ENCODE measurements at regions of chr1 and their contacts with region 1.

Region 1: GRCh38 chr1:207619871-207620542 is 24.9 kb upstream of the CR1L start:
- DNase-seq: peak; percentile 6
- ATAC-seq: peak; percentile 96
- H3K4me3 Mint-ChIP-seq: no peak overlapping the region
- H3K27ac Mint-ChIP-seq: no peak overlapping the region
- H3K4me1 Mint-ChIP-seq: no peaks in the 10 kb centered on the region
- H3K27me3 Mint-ChIP-seq: no peaks in the 10 kb centered on the region
- CTCF ChIP-seq: peak; percentile 48

Region 2: DNA sequence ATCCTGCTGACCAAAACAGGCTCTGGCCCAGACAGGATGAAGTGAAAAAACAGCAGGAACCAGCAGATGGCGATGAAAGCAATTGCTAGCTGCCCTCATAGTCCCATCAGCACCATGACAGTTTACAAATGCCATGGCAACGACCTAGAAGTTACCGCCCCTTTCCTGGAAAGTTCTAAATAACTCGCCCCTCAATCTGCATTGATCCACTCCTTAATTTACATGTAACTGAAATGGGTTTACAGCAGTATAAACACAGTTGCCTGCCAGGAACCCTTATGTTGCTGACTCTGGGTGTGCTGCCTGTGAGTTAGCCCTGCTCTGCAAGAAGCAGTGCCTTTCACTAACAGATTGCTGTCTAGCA is 40.6 kb before region 1 on chr1:
- CTCF ChIA-PET with region 1: interaction called, 16 read pairs
- POLR2A ChIA-PET with region 1: no interaction called
- intact Hi-C with region 1: no loop called
- DNase-seq: peak; percentile 67
- ATAC-seq: peak; percentile 85
- H3K4me3 Mint-ChIP-seq: no peak overlapping the region
- H3K27ac Mint-ChIP-seq: no peak overlapping the region
- H3K4me1 Mint-ChIP-seq: peaks cover 5% of the 10 kb centered on the region
- H3K27me3 Mint-ChIP-seq: no peaks in the 10 kb centered on the region
- CTCF ChIP-seq: peak; percentile 61

Region 3: GRCh38 chr1:207603777-207604176 is 16.2 kb before region 1 on chr1:
- CTCF ChIA-PET with region 1: interaction called, 22 read pairs
- POLR2A ChIA-PET with region 1: no interaction called
- intact Hi-C with region 1: no loop called
- DNase-seq: no peak
- ATAC-seq: no peak
- H3K4me3 Mint-ChIP-seq: no peak overlapping the region
- H3K27ac Mint-ChIP-seq: no peak overlapping the region
- H3K4me1 Mint-ChIP-seq: no peaks in the 10 kb centered on the region
- H3K27me3 Mint-ChIP-seq: no peaks in the 10 kb centered on the region
- CTCF ChIP-seq: no peak

Region 4: GRCh38 chr1:207631137-207631536 is 11.1 kb after region 1 on chr1:
- CTCF ChIA-PET with region 1: interaction called, 12 read pairs
- POLR2A ChIA-PET with region 1: no interaction called
- intact Hi-C with region 1: no loop called
- DNase-seq: no peak
- ATAC-seq: no peak
- H3K4me3 Mint-ChIP-seq: no peak overlapping the region
- H3K27ac Mint-ChIP-seq: no peak overlapping the region
- H3K4me1 Mint-ChIP-seq: no peaks in the 10 kb centered on the region
- H3K27me3 Mint-ChIP-seq: no peaks in the 10 kb centered on the region
- CTCF ChIP-seq: no peak

Measured in activated CD8-positive, alpha-beta T cell treated with anti-CD3 and anti-CD28 coated beads for 36 hours (primary cell).